GM23248 (cell line): ENCODE measurements at regions of chr5 and their contacts with region 1.

Region 1: GRCh38 chr5:172932313-172933017 is 26.8 kb upstream of the RPL26L1 start:
- DNase-seq: peak; percentile 90
- H3K4me3 ChIP-seq: no peak overlapping the region
- H3K27ac ChIP-seq: peak overlapping the region; percentile 96
- H3K4me1 ChIP-seq: peaks cover 42% of the 10 kb centered on the region
- H3K27me3 ChIP-seq: no peaks in the 10 kb centered on the region

Region 2: GRCh38 chr5:172162323-172162986 is 770.0 kb before region 1 on chr5:
- in situ Hi-C with region 1: no loop called
- DNase-seq: peak; percentile 34
- H3K4me3 ChIP-seq: no peak overlapping the region
- H3K27ac ChIP-seq: no peak overlapping the region
- H3K4me1 ChIP-seq: peaks cover 17% of the 10 kb centered on the region
- H3K27me3 ChIP-seq: no peaks in the 10 kb centered on the region

Region 3: GRCh38 chr5:172454358-172455086 is 477.9 kb before region 1 on chr5 and contains the start of gene SH3PXD2B:
- in situ Hi-C with region 1: loop called (anchors 25 kb)
- DNase-seq: peak; percentile 82
- H3K4me3 ChIP-seq: peak within 1 kb of the TSS; percentile 99
- H3K27ac ChIP-seq: peak within 1 kb of the TSS; percentile 84
- H3K4me1 ChIP-seq: peaks cover 29% of the 10 kb centered on the region
- H3K27me3 ChIP-seq: no peaks in the 10 kb centered on the region
- total RNA-seq, gene SH3PXD2B: 19.8 and 20.7 TPM in 2 replicates

Region 4: GRCh38 chr5:172721301-172722130 is 210.9 kb before region 1 on chr5:
- in situ Hi-C with region 1: loop called (anchors 5 kb)
- DNase-seq: peak; percentile 74
- H3K4me3 ChIP-seq: no peak overlapping the region
- H3K27ac ChIP-seq: no peak overlapping the region
- H3K4me1 ChIP-seq: peaks cover 14% of the 10 kb centered on the region; the same call in 1 of the 2 replicates
- H3K27me3 ChIP-seq: no peaks in the 10 kb centered on the region